ENCODE measurements at regions of chr12 and their contacts with region 1.

Region 1: GRCh38 chr12:40107098-40107802 is 1.4 kb upstream of the SLC2A13 start:
- DNase-seq: peak; percentile 76 to 98 (median 88)
- ATAC-seq: peak; percentile 37 to 73 (median 60)
- H3K4me3 ChIP-seq: peak overlapping the region in 2 of 4 donors; percentile 13 to 38
- H3K27ac ChIP-seq: peak overlapping the region in 1 of 4 donors; percentile 34
- H3K4me1 ChIP-seq: peaks cover 8 to 23% (median 10%) of the 10 kb centered on the region in 3 donors
- H3K27me3 ChIP-seq: no peaks in the 10 kb centered on the region
- CTCF ChIP-seq: peak; percentile 81 to 96 (median 88)

Region 2: GRCh38 chr12:40010899-40011774 is 96.1 kb before region 1 on chr12:
- intact Hi-C with region 1: loop called in 1 of 3 experiments (anchors 10 kb)
- DNase-seq: peak in 3 of 6 donors; percentile 32 to 56 (median 53)
- ATAC-seq: peak; percentile 78 to 99 (median 93)
- H3K4me3 ChIP-seq: no peak overlapping the region
- H3K27ac ChIP-seq: no peak overlapping the region
- H3K4me1 ChIP-seq: no peaks in the 10 kb centered on the region
- H3K27me3 ChIP-seq: no peaks in the 10 kb centered on the region
- CTCF ChIP-seq: peak; percentile 39 to 85 (median 72)

Region 3: DNA sequence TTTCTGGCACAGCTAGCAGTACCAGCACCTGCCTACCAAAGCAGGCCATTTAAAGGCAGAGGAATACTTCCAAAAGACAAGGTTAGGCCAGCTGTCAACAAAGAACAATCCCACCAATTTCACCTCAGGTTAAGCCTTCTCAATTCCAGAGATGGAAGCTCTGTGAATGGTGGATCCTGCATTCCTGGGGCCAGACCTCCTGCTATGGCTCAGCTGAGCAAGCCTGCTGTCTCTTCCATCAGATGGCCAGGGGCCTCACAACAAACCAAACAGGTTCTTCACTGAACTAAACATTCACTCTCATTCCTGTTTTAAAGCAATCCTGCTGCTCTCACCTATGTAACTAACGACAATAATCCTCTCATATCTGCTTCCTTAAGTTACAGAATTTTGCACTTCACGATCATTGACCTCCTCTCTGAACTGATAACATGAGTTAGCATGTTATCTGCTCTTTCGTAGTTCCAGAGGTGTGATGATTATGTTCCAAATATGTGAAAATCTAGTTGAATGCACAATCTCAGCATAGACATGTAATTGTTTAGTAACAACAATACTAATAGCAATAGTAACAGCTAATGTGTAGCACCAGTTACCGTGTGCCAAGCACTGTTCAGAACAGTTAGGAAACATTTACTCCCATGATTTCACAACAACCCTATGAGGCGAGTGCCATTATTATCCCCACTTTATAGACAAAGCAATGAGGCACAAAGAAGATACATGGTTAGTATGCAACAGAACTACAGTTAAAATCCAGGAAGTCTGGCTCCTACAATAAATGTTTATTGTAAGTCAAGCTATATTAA is 74.6 kb before region 1 on chr12:
- intact Hi-C with region 1: loop called in 1 of 3 experiments (anchors 10 kb)
- DNase-seq: no peak
- ATAC-seq: peak; percentile 54 to 71 (median 64)
- H3K4me3 ChIP-seq: peak overlapping the region in 1 of 4 donors; percentile 5
- H3K27ac ChIP-seq: peak overlapping the region; percentile 9 to 51 (median 42)
- H3K4me1 ChIP-seq: peaks cover 0 to 23% (median 17%) of the 10 kb centered on the region in 3 donors
- H3K27me3 ChIP-seq: no peaks in the 10 kb centered on the region
- CTCF ChIP-seq: no peak

Region 4: GRCh38 chr12:40054554-40055227 is 52.6 kb before region 1 on chr12:
- intact Hi-C with region 1: no loop called
- DNase-seq: no peak
- ATAC-seq: peak in 3 of 4 donors; percentile 65 to 83 (median 75)
- H3K4me3 ChIP-seq: no peak overlapping the region
- H3K27ac ChIP-seq: no peak overlapping the region
- H3K4me1 ChIP-seq: peaks cover 0 to 13% (median 8%) of the 10 kb centered on the region in 3 donors
- H3K27me3 ChIP-seq: no peaks in the 10 kb centered on the region
- CTCF ChIP-seq: no peak